Endothelial cell of umbilical vein (primary cell): ENCODE measurements at regions of chr1 and their contacts with region 1.

Region 1: GRCh38 chr1:156226116-156226538 is 13.3 kb downstream of the PMF1 start:
- DNase-seq: no peak
- H3K4me3 ChIP-seq: no peak overlapping the region
- H3K27ac ChIP-seq: no peak overlapping the region
- H3K4me1 ChIP-seq: peaks cover 6% of the 10 kb centered on the region
- H3K27me3 ChIP-seq: no peaks in the 10 kb centered on the region
- CTCF ChIP-seq: no peak
- POLR2A ChIP-seq: no peak

Region 2: GRCh38 chr1:155951753-155952504 is 274.2 kb before region 1 on chr1:
- CTCF ChIA-PET with region 1: no interaction called
- POLR2A ChIA-PET with region 1: no interaction called
- dilution Hi-C with region 1: no loop called
- intact Hi-C with region 1: no loop called
- DNase-seq: no peak
- H3K4me3 ChIP-seq: no peak overlapping the region
- H3K27ac ChIP-seq: no peak overlapping the region
- H3K4me1 ChIP-seq: no peaks in the 10 kb centered on the region
- H3K27me3 ChIP-seq: no peaks in the 10 kb centered on the region
- CTCF ChIP-seq: no peak
- POLR2A ChIP-seq: no peak

Region 3: GRCh38 chr1:156090822-156091188 is 135.3 kb before region 1 on chr1:
- CTCF ChIA-PET with region 1: interaction called, 51 read pairs
- POLR2A ChIA-PET with region 1: no interaction called
- dilution Hi-C with region 1: no loop called
- intact Hi-C with region 1: loop called (anchors 1 kb)
- DNase-seq: peak; percentile 74
- H3K4me3 ChIP-seq: no peak overlapping the region
- H3K27ac ChIP-seq: no peak overlapping the region
- H3K4me1 ChIP-seq: peaks cover 14% of the 10 kb centered on the region
- H3K27me3 ChIP-seq: no peaks in the 10 kb centered on the region
- CTCF ChIP-seq: peak; percentile 48 to 81
- POLR2A ChIP-seq: no peak

Region 4: GRCh38 chr1:156129706-156130581 is 96.2 kb before region 1 on chr1:
- CTCF ChIA-PET with region 1: interaction called, 37 read pairs
- POLR2A ChIA-PET with region 1: no interaction called
- dilution Hi-C with region 1: loop called (anchors 10 kb)
- intact Hi-C with region 1: no loop called
- DNase-seq: peak; percentile 94
- H3K4me3 ChIP-seq: no peak overlapping the region
- H3K27ac ChIP-seq: peak overlapping the region; percentile 94
- H3K4me1 ChIP-seq: peaks cover 54% of the 10 kb centered on the region
- H3K27me3 ChIP-seq: no peaks in the 10 kb centered on the region
- CTCF ChIP-seq: peak; percentile 94
- POLR2A ChIP-seq: peak; percentile 63

Region 5: DNA sequence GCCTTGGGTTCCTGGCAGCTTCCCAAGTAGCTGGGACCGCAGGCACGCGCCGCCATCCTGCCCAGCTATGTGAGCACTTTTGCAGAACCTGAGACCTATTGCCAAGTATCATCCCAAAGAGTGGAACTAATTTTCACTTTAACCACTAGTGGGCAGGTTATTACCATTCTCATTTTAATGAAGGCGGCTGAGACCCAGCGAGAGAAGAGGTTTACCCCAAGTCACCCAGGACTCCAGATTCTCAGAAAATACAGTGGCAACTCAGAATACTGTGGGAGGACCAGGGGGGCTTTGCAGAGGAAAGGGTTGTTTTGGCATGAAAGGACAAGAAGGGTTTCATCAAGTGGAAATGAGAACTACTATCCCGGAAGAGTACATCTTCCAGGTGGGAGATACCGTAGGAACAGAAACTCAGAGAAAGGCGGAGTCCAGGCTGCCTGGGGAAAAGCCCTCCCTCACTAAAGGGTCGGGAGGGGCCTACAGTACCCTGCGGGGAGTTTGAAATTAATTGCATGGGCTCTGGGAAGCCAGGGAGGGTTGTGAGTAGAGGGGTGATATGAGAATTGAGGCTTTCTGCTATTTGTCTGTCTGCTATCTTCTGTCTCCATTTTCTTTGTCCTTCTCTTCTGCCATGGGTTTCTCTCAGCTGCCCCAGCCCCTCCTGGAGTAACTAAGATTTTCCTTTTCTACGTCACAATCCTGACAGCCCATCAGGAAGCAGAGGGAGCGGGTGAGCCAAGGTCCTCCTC is 79.9 kb before region 1 on chr1:
- CTCF ChIA-PET with region 1: interaction called, 489 read pairs
- POLR2A ChIA-PET with region 1: interaction called, 8 read pairs
- dilution Hi-C with region 1: no loop called
- intact Hi-C with region 1: loop called (anchors 1 kb)
- DNase-seq: peak; percentile 92
- H3K4me3 ChIP-seq: peak overlapping the region in 1 of 3 experiments; percentile 5
- H3K27ac ChIP-seq: peak overlapping the region; percentile 18
- H3K4me1 ChIP-seq: peaks cover 24% of the 10 kb centered on the region
- H3K27me3 ChIP-seq: no peaks in the 10 kb centered on the region
- CTCF ChIP-seq: peak; percentile 63 to 67
- POLR2A ChIP-seq: no peak

Region 6: DNA sequence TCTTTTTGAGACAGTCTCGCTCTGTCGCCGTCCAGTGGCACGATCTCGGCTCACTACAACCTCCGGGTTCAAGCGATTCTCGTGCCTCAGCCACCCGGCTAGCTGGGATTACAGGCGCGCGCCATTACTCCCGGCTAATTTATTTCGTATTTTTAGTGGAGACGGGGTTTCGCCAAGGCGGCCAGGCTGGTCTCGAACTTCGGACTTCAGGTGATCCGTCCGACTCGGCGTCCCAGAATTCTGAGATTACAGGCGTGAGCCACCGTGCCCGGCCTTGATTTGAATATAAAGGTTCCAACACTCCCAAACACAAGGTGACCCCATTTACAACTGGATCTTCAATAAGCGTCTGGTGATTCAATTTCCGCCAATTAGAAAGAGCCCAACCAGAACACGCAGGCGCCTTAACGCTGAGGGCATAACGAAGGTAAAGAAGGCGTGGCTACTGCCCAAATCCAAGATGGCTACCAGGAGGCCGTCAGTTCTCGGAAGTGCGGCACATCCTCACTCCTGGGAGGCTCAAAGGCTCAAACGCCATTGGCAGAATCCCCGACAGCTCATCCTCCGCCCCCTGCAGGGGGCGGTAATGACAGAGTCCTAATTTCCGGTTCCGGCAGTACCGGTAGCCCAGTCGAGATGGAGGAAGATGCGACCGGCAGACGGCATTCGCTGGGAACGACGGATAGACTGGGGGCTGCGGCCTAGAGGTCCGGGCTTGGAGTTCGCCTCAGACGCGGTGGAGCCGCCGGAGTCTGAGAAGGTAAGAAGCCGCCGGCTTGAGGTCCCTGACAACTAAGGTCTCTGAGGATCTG is 32.4 kb before region 1 on chr1 and contains the start of gene SLC25A44:
- CTCF ChIA-PET with region 1: interaction called, 20 read pairs
- POLR2A ChIA-PET with region 1: interaction called, 3 read pairs
- dilution Hi-C with region 1: no loop called
- intact Hi-C with region 1: loop called (anchors 5 kb)
- DNase-seq: peak; percentile 100
- H3K4me3 ChIP-seq: peak within 1 kb of the TSS; percentile 33 to 86 (median 64)
- H3K27ac ChIP-seq: peak within 1 kb of the TSS; percentile 86
- H3K4me1 ChIP-seq: peaks cover 9% of the 10 kb centered on the region
- H3K27me3 ChIP-seq: no peaks in the 10 kb centered on the region
- CTCF ChIP-seq: peak; percentile 27 to 53
- POLR2A ChIP-seq: peak; percentile 85
- total RNA-seq, gene SLC25A44: 24.0 and 26.3 TPM in 2 replicates

Region 7: GRCh38 chr1:156212833-156213643 is 13.1 kb before region 1 on chr1 and contains the start of gene PMF1:
- CTCF ChIA-PET with region 1: interaction called, 43 read pairs
- POLR2A ChIA-PET with region 1: interaction called, 10 read pairs
- dilution Hi-C with region 1: no loop called
- intact Hi-C with region 1: no loop called
- DNase-seq: peak; percentile 98
- H3K4me3 ChIP-seq: peak within 1 kb of the TSS; percentile 44 to 80 (median 79)
- H3K27ac ChIP-seq: peak within 1 kb of the TSS; percentile 97
- H3K4me1 ChIP-seq: peaks cover 15% of the 10 kb centered on the region
- H3K27me3 ChIP-seq: no peaks in the 10 kb centered on the region
- CTCF ChIP-seq: no peak
- POLR2A ChIP-seq: peak; percentile 90
- total RNA-seq, gene PMF1: 58.4 and 61.6 TPM in 2 replicates